Natural killer cell (primary cell): ENCODE measurements at regions of chrX and their contacts with region 1.

Region 1: DNA sequence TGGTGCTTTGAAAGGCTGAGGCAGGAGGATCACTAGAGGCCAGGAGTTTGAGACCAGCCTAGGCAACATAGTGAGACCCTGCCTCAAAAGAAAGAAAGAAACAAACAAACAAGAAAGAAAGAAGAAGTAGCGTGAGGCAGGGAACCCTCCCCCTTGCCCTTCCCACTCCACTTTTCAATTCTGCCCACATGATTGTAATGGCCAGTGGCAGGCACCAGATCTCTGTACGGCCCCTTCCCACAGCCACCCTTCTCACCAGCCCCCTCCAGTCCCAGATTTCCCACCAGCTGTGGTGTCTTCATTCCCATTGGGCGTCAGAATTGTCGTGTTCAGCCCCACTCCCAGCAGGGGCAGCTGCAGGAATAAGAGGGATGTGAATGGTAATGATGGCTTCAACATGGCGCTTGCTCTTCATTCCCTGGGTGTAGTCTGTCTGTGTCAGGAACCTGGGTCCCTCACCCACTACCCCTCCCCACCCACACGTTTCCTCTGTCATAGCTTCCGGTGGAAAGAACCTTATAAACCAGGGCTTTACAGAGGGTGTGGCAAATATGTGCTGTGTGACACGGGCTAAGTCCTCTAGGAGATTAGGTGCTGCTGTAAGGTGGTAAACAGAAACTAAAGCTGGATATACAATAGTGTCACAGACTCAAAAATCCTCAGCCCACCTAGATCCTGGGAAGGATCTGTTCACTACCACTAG is at the start of gene IL2RG:
- DNase-seq: peak; percentile 60 to 92
- ATAC-seq: peak; percentile 76 to 95 (median 85)
- H3K4me3 ChIP-seq: peak within 1 kb of the TSS; percentile 74
- H3K4me3 Mint-ChIP-seq: peak within 1 kb of the TSS; percentile 84
- H3K27ac ChIP-seq: peak within 1 kb of the TSS; percentile 100
- H3K27ac Mint-ChIP-seq: peak within 1 kb of the TSS; percentile 97 to 99
- H3K4me1 ChIP-seq: peaks cover 57% of the 10 kb centered on the region
- H3K4me1 Mint-ChIP-seq: peaks cover 57 to 63% of the 10 kb centered on the region in 2 donors
- H3K27me3 ChIP-seq: no peaks in the 10 kb centered on the region
- H3K27me3 Mint-ChIP-seq: no peaks in the 10 kb centered on the region
- CTCF ChIP-seq: no peak
- total RNA-seq, gene IL2RG: 506 to 577 (median 550) TPM

Region 2: DNA sequence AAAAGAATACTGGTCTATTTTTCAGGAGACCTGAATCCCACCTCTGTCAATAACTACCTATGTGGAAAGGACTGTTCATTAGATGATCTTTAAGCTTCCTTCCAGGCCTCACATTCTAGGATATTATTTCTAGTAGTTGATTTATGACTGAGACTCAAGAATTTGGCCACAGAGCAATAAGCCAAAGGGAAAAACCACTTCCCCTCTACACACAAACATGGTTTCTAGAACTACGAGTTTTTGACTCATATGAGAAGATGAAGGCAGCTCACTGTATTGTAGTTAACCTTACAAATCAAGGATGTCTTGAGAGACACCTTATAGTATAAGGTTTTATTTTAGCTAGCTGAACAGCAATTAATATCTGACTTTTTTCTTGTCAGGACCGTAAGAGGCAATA is 725.1 kb before region 1 on chrX:
- intact Hi-C with region 1: no loop called
- DNase-seq: no peak
- ATAC-seq: no peak
- H3K4me3 ChIP-seq: no peak overlapping the region
- H3K4me3 Mint-ChIP-seq: no peak overlapping the region
- H3K27ac ChIP-seq: no peak overlapping the region
- H3K27ac Mint-ChIP-seq: no peak overlapping the region
- H3K4me1 ChIP-seq: no peaks in the 10 kb centered on the region
- H3K4me1 Mint-ChIP-seq: no peaks in the 10 kb centered on the region
- H3K27me3 ChIP-seq: no peaks in the 10 kb centered on the region
- H3K27me3 Mint-ChIP-seq: no peaks in the 10 kb centered on the region
- CTCF ChIP-seq: no peak

Region 3: DNA sequence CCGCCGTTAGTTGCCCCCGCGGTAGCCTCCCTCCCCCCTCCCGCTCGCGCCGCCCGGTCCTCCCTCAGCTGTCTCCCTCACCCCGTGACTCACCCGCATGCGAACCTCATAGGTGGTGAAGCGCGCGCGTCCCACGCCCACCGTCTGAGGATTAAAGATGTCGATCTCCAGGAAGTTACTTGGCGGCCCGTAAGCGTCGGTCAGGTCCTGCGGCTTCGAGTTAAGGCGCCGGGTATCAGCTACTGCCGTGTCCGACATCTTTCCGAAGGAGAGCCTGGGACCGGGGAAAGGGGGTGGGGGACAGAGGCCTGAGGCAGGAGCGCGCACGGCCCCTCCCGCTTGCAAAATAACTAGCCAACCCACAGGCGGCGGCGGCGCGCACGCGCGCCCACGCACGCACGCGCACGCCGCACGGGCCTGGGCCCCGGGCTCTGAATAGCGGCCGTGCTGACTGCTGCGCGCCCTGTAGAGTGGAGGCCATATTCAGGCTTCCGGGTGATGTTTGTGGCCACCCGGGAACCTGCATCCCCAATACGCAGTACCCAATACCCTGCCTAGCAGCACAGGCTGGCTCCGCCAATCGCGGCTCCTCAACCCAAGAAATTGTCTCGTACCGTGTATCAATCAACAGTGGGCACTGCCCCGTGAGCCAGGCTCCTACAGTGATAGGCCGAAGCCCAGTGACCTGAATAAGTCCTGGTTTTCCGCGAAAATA is 43.1 kb before region 1 on chrX and contains the start of gene SNX12:
- intact Hi-C with region 1: loop called (anchors 5 kb)
- DNase-seq: peak; percentile 81 to 93
- ATAC-seq: peak; percentile 92 to 99 (median 93)
- H3K4me3 ChIP-seq: peak within 1 kb of the TSS; percentile 85
- H3K4me3 Mint-ChIP-seq: peak within 1 kb of the TSS; percentile 96
- H3K27ac ChIP-seq: peak within 1 kb of the TSS; percentile 95
- H3K27ac Mint-ChIP-seq: peak within 1 kb of the TSS; percentile 88 to 97
- H3K4me1 ChIP-seq: peaks cover 9% of the 10 kb centered on the region
- H3K4me1 Mint-ChIP-seq: peaks cover 11 to 21% of the 10 kb centered on the region in 2 donors
- H3K27me3 ChIP-seq: no peaks in the 10 kb centered on the region
- H3K27me3 Mint-ChIP-seq: no peaks in the 10 kb centered on the region
- CTCF ChIP-seq: no peak
- total RNA-seq, gene SNX12: 36.0 to 40.1 (median 38.6) TPM

Region 4: DNA sequence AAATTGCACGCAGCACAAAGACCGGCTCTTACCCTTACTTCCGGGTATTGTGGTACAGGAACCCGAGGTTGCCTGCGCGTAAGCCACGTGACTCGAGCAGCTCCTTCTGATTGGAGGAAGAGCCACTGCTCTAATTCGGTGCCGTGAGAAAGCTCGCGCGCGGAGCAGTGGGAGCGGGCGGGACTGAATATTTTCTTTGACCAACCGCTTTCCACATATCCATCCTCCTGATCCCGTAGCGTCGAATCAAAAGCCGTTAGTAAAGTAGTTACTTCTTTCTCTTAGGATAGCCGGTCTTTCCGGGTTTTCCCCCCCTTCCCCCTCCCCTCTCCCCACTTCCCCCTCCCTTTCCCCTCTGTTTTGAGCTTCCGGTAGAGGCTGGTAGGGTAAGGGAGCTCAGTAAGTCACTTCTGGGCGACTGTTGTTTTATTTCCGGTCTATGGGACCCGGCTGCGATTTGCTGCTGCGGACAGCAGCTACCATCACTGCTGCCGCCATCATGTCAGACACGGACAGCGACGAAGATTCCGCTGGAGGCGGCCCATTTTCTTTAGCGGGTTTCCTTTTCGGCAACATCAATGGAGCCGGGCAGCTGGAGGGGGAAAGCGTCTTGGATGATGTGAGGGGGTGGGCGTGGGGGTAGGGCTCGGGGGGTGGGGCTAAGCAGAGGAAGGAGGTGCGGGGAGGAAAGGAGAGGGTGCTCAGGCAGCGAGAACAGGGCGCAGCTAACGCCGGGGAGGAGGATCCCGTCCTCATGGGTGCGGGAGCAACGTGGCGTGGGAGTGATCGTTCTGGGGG is 254.8 kb after region 1 on chrX and contains the start of gene TAF1:
- intact Hi-C with region 1: loop called (anchors 5 kb)
- DNase-seq: peak; percentile 83 to 95
- ATAC-seq: peak; percentile 84 to 95 (median 89)
- H3K4me3 ChIP-seq: peak within 1 kb of the TSS; percentile 93
- H3K4me3 Mint-ChIP-seq: peak within 1 kb of the TSS; percentile 97
- H3K27ac ChIP-seq: peak within 1 kb of the TSS; percentile 95
- H3K27ac Mint-ChIP-seq: peak within 1 kb of the TSS; percentile 97
- H3K4me1 ChIP-seq: peaks cover 25% of the 10 kb centered on the region
- H3K4me1 Mint-ChIP-seq: peaks cover 22 to 30% of the 10 kb centered on the region in 2 donors
- H3K27me3 ChIP-seq: no peaks in the 10 kb centered on the region
- H3K27me3 Mint-ChIP-seq: peaks cover 0 to 6% of the 10 kb centered on the region in 2 donors
- CTCF ChIP-seq: no peak
- total RNA-seq, gene TAF1: 89.5 to 94.5 (median 94.2) TPM